ENCODE measurements at regions of chr12 and their contacts with region 1.

Region 1: GRCh38 chr12:50222275-50222795 is 55.2 kb upstream of the CERS5 start:
- DNase-seq: peak; percentile 32
- H3K4me3 Mint-ChIP-seq: no peak overlapping the region
- H3K27ac Mint-ChIP-seq: no peak overlapping the region
- H3K4me1 Mint-ChIP-seq: peaks cover 36% of the 10 kb centered on the region
- H3K27me3 Mint-ChIP-seq: no peaks in the 10 kb centered on the region

Region 2: GRCh38 chr12:49673446-49674317 is 548.7 kb before region 1 on chr12:
- CTCF ChIA-PET with region 1: no interaction called
- intact Hi-C with region 1: loop called (anchors 10 kb)
- DNase-seq: no peak
- H3K4me3 Mint-ChIP-seq: no peak overlapping the region
- H3K27ac Mint-ChIP-seq: peak overlapping the region; percentile 98
- H3K4me1 Mint-ChIP-seq: peaks cover 85% of the 10 kb centered on the region
- H3K27me3 Mint-ChIP-seq: no peaks in the 10 kb centered on the region

Region 3: GRCh38 chr12:50211392-50212070 is 10.8 kb before region 1 on chr12:
- CTCF ChIA-PET with region 1: interaction called, 27 read pairs
- intact Hi-C with region 1: loop called (anchors 1 kb)
- DNase-seq: peak; percentile 38
- H3K4me3 Mint-ChIP-seq: peak overlapping the region; percentile 10
- H3K27ac Mint-ChIP-seq: peak overlapping the region; percentile 88
- H3K4me1 Mint-ChIP-seq: peaks cover 40% of the 10 kb centered on the region
- H3K27me3 Mint-ChIP-seq: no peaks in the 10 kb centered on the region

Region 4: DNA sequence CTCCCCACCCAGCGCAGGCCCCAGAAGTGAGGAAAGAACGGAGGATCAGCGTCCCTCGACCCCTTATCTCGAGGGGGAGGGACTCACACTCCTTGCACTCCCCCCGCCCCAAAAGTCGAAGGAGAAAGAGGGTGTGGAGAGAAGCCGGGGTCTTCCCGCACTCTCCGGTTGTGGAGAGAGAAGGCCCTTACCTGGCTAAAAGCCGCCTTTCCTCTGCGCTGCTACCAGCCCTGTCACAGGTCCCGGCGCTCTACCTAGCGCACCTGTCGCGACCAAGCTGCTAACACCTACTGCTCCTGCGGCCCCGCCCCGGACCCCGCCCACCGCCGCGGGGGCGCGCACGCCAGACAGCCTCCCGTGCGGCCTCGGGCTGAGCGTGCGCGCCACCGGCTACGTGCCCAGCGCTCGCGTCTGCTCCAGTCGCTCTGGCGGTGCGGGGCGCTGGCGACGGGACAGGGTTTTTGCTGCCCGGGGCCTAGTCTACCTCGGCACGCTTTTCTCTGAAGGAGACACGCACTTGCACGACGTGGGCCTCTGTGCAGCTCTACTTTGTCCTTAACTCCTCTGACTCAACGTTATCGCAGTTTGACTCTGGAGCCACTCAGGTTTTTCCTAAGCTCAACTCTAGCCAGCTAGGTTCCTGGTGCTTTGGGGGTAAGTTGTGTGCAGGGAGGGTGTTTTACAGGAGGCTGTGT is 61.0 kb after region 1 on chr12 and contains the start of gene LIMA1:
- CTCF ChIA-PET with region 1: interaction called, 6 read pairs
- intact Hi-C with region 1: loop called (anchors 2 kb)
- DNase-seq: peak; percentile 92
- H3K4me3 Mint-ChIP-seq: peak within 1 kb of the TSS; percentile 90
- H3K27ac Mint-ChIP-seq: peak within 1 kb of the TSS; percentile 72
- H3K4me1 Mint-ChIP-seq: peaks cover 13% of the 10 kb centered on the region
- H3K27me3 Mint-ChIP-seq: no peaks in the 10 kb centered on the region
- total RNA-seq, gene LIMA1: 15.9 to 16.5 TPM

Region 5: DNA sequence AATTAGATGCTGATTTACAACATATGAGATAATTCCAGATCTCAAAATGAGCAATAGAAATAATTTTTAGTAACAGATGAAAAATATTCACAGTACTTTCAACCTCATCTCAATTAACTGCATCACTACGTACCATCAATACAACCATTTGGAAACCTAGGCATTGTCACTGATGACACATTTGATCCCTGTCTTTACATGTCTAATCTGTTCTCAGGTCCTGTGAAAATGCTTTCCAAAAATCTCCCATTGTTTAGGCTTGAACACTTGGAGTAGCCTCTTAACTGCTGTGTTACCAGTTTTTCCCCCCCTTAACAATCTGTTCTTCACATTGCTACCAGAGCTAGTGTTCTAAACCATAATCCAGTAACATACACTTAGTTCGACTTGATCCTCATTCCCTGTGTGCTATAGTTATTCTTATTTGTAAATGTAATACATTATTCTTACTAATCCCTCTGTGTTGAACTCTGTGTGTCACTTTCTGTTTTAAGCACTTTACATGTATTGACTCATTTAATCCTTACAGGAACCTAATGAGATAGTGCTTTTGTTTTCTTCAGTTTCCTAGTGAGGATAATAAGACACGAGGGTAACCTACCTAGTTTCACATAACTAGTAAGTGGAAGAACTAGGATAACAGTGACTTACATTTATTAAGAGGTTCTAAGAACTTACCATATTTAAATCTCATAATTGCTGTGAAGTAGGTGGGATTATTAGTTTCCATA is 220.0 kb after region 1 on chr12:
- CTCF ChIA-PET with region 1: no interaction called
- intact Hi-C with region 1: loop called (anchors 5 kb)
- DNase-seq: no peak
- H3K4me3 Mint-ChIP-seq: no peak overlapping the region
- H3K27ac Mint-ChIP-seq: peak overlapping the region; percentile 59
- H3K4me1 Mint-ChIP-seq: peaks cover 16% of the 10 kb centered on the region
- H3K27me3 Mint-ChIP-seq: no peaks in the 10 kb centered on the region

Region 6: GRCh38 chr12:50620109-50620977 is 398.0 kb after region 1 on chr12:
- CTCF ChIA-PET with region 1: no interaction called
- intact Hi-C with region 1: loop called (anchors 5 kb)
- DNase-seq: peak; percentile 63
- H3K4me3 Mint-ChIP-seq: no peak overlapping the region
- H3K27ac Mint-ChIP-seq: peak overlapping the region; percentile 70
- H3K4me1 Mint-ChIP-seq: peaks cover 74% of the 10 kb centered on the region
- H3K27me3 Mint-ChIP-seq: no peaks in the 10 kb centered on the region

Region 7: DNA sequence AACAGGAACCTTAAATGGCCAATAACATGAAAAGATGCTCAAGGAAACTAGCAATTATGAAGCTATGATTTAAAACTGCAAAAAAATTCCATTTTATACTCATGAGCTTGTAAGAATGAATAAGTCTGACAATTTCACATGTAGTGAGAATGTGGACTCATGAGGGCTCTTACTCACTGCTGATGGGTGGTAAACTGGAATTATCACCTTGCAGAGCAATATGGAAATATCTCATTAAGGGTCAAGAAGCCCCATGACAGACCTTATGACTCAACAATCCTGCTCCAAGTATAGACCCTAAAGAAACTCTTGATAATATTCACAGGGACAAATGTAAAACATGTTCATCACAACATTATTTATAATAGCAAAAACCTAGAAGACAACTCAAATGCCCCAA is 1071.4 kb after region 1 on chr12:
- CTCF ChIA-PET with region 1: no interaction called
- intact Hi-C with region 1: no loop called
- DNase-seq: no peak
- H3K4me3 Mint-ChIP-seq: no peak overlapping the region
- H3K27ac Mint-ChIP-seq: peak overlapping the region; percentile 70
- H3K4me1 Mint-ChIP-seq: peaks cover 24% of the 10 kb centered on the region
- H3K27me3 Mint-ChIP-seq: no peaks in the 10 kb centered on the region